ENCODE measurements at regions of chr5 and their contacts with region 1.

Region 1: GRCh38 chr5:36422952-36423351 is 121.2 kb upstream of the RANBP3L start:
- DNase-seq: peak; percentile 87
- ATAC-seq: peak; percentile 78
- H3K4me3 ChIP-seq: no peak overlapping the region
- H3K27ac ChIP-seq: peak overlapping the region; percentile 19
- H3K4me1 ChIP-seq: peaks cover 29% of the 10 kb centered on the region
- H3K27me3 ChIP-seq: no peaks in the 10 kb centered on the region
- CTCF ChIP-seq: no peak

Region 2: GRCh38 chr5:36436306-36436705 is 13.4 kb after region 1 on chr5:
- CTCF ChIA-PET with region 1: no interaction called
- POLR2A ChIA-PET with region 1: interaction called, 18 read pairs
- intact Hi-C with region 1: no loop called
- DNase-seq: no peak
- ATAC-seq: no peak
- H3K4me3 ChIP-seq: no peak overlapping the region
- H3K27ac ChIP-seq: no peak overlapping the region
- H3K4me1 ChIP-seq: no peaks in the 10 kb centered on the region
- H3K27me3 ChIP-seq: no peaks in the 10 kb centered on the region
- CTCF ChIP-seq: no peak

Region 3: DNA sequence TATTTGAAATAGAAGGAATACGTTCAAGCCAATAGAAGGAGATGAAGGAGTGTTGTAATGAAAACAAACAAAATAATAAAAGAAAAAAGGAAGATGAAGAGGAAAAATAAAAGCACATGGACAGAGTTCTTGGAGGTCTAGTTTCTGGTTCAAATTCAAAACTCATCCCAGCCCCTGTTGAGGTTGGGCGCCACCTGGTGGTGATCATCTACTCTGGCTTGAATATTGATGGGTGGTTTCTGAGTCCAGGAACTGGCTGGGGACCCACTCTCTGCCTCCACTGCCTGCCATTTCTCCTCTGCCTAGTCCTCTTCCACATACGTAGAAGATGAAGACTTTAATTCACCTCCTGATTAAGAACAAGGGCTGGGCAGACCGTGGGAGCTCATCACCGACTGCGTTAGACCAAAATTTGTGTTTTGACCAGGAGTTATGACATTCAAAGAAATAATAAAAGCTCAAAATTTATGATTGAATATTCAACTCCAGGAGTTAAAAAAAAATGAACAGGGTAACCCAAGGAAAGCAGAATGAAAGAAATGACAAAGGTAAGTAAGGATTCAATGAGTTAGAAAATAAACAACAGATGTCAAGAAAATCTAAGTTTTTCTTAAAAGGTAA is 84.5 kb after region 1 on chr5:
- CTCF ChIA-PET with region 1: interaction called, 3 read pairs
- POLR2A ChIA-PET with region 1: no interaction called
- intact Hi-C with region 1: loop called (anchors 2 kb)
- DNase-seq: peak; percentile 86
- ATAC-seq: peak; percentile 39
- H3K4me3 ChIP-seq: no peak overlapping the region
- H3K27ac ChIP-seq: no peak overlapping the region
- H3K4me1 ChIP-seq: peaks cover 18% of the 10 kb centered on the region
- H3K27me3 ChIP-seq: no peaks in the 10 kb centered on the region
- CTCF ChIP-seq: peak; percentile 93